ENCODE measurements at regions of chr12 and their contacts with region 1.

Region 1: DNA sequence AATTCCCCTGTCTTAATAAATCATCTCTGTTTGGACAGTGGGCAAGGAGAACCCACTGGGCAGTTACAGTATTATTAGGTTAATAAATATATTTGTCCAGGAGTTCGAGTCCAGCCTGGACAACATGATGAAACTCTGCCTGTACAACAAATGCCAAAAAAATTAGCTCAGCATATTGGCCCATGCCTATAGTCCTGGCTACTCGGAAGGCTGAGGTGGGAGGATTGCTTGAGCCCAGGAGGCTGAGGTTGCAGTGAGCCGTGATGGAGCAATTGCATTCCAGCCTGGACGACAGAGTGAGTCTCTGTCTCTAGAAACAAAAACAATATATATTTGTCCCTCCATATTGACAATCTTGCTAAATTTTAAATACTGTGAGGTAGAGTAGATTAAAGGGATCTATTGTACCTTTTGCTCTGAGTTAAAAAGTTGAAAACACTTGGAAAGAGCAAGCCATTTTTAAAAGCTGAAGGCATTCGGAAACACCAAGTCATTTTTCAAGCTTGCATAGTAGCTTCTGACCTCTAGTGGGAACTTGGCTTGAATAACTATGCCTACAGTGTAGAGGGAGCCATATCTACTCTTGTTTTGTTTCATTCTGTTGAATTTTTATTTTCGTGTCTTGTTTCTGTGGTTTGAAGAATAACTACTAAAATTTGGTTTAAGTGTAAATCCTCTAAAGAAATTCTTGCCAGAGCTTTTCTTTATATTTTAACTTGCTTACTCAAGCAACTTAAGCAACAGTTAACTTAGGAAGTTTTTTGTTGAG is 14.6 kb upstream of the EEA1 start:
- DNase-seq: no peak
- H3K4me3 ChIP-seq: no peak overlapping the region
- H3K27ac ChIP-seq: no peak overlapping the region
- H3K4me1 ChIP-seq: peaks cover 0 to 7% (median 0%) of the 10 kb centered on the region in 4 donors
- H3K27me3 ChIP-seq: no peaks in the 10 kb centered on the region
- CTCF ChIP-seq: no peak

Region 2: GRCh38 chr12:92185052-92185451 is 758.6 kb before region 1 on chr12:
- intact Hi-C with region 1: loop called (anchors 10 kb)
- DNase-seq: no peak
- H3K4me3 ChIP-seq: no peak overlapping the region
- H3K27ac ChIP-seq: no peak overlapping the region
- H3K4me1 ChIP-seq: no peaks in the 10 kb centered on the region
- H3K27me3 ChIP-seq: no peaks in the 10 kb centered on the region
- CTCF ChIP-seq: no peak

Region 3: DNA sequence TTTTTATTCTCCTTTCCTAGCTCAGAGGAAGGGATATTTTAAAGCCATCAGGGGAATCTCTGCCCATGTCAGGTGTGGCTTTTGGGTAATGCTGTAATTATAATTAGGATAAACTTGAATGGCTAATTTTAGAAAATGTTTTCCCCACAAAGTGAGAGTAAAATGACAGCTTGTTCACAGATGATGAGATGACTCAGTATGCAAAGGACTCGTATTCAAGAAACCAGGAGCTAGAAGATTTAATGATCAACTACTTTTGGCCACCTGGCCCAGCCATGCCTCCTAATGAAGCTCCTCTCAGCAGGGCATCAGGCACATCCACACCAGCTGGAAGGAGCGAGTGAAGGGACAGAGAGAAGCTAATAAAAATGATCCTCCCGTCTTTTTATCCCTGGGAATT is 269.9 kb before region 1 on chr12:
- intact Hi-C with region 1: no loop called
- DNase-seq: no peak
- H3K4me3 ChIP-seq: no peak overlapping the region
- H3K27ac ChIP-seq: no peak overlapping the region
- H3K4me1 ChIP-seq: no peaks in the 10 kb centered on the region
- H3K27me3 ChIP-seq: no peaks in the 10 kb centered on the region
- CTCF ChIP-seq: no peak

Region 4: DNA sequence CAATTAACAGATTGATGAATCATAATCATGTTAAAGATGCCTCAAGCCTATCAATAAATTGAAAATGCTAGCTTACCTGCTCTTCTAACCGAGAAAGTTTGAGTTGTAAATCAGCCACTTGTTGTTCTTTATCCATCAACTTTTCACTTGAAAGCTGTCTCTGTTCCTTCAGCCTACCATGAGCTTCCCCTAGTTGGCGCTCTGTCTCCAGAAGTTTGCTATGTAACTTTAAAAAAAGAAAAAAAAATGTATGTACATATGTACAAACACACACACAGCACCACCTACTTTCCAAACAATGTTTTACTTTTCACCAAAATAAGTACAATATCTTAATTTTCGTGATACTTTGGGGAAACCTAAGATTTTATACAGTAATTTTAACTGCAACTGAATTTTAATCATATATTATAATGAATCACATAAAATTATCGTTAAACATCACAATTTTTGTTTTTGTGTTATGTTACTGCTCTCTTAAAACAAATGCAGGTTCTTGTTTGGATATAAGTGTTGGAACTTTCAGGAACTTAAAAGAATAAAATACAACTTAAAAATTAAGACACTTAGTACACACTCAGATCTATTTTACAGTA is 115.7 kb before region 1 on chr12:
- intact Hi-C with region 1: no loop called
- DNase-seq: no peak
- H3K4me3 ChIP-seq: no peak overlapping the region
- H3K27ac ChIP-seq: no peak overlapping the region
- H3K4me1 ChIP-seq: no peaks in the 10 kb centered on the region
- H3K27me3 ChIP-seq: no peaks in the 10 kb centered on the region
- CTCF ChIP-seq: peak in 1 of 2 experiments; percentile 29

Region 5: GRCh38 chr12:92871116-92871515 is 72.5 kb before region 1 on chr12:
- intact Hi-C with region 1: no loop called
- DNase-seq: no peak
- H3K4me3 ChIP-seq: no peak overlapping the region
- H3K27ac ChIP-seq: no peak overlapping the region
- H3K4me1 ChIP-seq: peaks cover 0 to 22% (median 0%) of the 10 kb centered on the region in 4 donors
- H3K27me3 ChIP-seq: no peaks in the 10 kb centered on the region
- CTCF ChIP-seq: no peak

Region 6: DNA sequence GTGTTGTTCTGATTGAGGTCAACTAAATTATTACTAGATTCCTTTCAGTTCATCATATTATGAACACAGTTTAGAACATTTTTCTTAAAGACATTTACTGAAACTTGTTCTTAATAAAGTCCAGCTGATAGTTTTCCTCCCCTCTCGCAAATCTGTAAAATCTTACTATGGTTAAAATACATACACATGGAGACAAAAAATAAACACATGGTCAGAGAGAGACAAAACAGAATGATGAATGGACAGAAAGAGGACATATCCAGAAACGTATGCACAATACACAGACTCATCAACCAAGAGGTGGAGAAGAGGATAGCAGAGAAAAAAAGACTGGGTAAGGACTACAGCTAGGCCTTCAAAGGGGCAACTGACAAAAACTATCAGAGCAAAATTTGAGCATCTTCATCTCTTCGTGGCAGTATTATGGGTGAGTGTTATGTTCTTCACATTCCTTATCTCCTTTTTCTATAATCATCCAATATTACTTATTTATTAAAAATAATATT is 53.0 kb before region 1 on chr12:
- intact Hi-C with region 1: no loop called
- DNase-seq: no peak
- H3K4me3 ChIP-seq: no peak overlapping the region
- H3K27ac ChIP-seq: no peak overlapping the region
- H3K4me1 ChIP-seq: peaks cover 0 to 4% (median 0%) of the 10 kb centered on the region in 4 donors
- H3K27me3 ChIP-seq: no peaks in the 10 kb centered on the region
- CTCF ChIP-seq: no peak